Ovary (tissue), 10 donors: ENCODE measurements at regions of chr1 and their contacts with region 1.

Region 1: DNA sequence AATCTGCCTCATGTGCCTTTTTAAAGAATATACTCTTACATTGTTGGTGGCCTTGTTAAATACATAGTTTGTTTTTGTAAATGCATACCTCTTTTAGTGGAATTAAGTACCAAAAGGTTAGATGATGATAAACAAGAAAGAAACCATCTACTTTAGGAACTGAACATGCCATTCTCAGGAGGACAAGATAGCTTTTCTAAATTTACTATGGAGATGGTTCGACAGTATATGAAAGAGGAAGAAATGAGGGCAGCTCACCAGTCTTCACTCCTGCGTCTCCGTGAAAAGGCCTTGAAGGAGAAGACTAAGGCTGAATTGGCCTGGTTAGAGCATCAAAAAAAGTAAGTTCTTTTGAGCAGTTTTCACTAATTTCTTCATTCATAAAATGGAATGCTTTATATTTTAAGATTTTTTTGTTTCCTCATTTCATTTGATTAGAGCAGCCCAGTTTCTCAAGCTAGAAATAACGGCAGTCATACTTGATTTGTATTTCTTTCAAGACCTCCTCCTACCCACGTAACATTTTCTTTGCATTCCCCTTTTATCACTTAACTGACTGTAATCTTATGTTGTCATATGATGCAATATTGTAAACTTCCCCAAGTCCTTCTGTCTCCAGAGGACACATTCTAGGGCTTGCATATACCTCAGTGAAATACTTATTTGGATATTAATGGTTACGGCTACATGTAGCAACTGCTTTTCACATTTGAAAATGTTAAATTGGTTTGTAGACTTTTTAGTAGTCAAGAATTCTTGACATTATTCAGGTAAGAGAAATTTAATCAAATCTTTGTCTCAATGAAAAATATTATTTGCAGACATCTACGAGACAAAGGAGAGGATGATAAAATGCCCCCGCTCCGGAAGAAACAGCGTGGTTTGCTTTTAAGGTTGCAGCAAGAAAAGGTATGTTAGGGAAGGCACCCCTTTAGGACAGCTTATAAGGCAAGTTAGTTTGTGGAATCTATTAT is 99.3 kb downstream of the CEP350 start:
- DNase-seq: no peak
- H3K4me3 ChIP-seq: no peak overlapping the region
- H3K27ac ChIP-seq: no peak overlapping the region
- H3K4me1 ChIP-seq: no peaks in the 10 kb centered on the region
- H3K27me3 ChIP-seq: no peaks in the 10 kb centered on the region
- CTCF ChIP-seq: no peak
- EP300 ChIP-seq: no peak
- POLR2A ChIP-seq: no peak

Region 2: DNA sequence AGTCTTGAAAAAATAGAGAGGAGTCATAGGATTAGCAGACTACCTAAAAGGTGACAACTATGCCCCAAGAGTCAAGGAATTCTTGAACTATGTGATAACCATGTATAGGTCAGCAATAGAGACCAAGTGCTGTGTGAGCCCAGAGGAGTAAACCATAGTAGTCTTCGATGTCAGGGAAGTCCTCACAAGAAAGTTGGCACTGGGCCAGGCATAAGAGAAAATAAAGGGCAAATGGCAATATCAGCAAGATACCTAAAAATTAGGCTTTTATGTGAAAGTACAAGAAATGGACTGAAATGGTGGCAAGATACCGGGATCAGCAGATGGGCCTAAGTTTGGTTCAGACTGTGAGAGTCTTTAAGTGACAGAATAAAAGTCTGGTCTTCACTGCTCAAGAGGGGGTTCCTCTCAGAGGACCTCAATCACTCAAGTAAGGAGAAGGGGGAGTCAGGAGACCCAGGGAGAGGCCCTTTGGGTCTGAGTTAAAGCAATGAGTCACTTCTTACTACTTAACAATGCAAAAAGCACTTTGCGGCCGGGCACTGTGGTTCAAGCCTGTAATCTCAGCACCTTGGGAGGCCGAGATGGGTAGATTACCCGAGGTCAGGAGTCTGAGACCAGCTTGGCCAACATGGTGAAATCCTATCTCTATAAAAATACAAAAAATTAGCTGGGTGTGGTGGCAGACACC is 1446.0 kb before region 1 on chr1:
- intact Hi-C with region 1: no loop called
- DNase-seq: no peak
- H3K4me3 ChIP-seq: no peak overlapping the region
- H3K27ac ChIP-seq: no peak overlapping the region
- H3K4me1 ChIP-seq: no peaks in the 10 kb centered on the region
- H3K27me3 ChIP-seq: no peaks in the 10 kb centered on the region
- CTCF ChIP-seq: no peak
- EP300 ChIP-seq: no peak
- POLR2A ChIP-seq: no peak

Region 3: DNA sequence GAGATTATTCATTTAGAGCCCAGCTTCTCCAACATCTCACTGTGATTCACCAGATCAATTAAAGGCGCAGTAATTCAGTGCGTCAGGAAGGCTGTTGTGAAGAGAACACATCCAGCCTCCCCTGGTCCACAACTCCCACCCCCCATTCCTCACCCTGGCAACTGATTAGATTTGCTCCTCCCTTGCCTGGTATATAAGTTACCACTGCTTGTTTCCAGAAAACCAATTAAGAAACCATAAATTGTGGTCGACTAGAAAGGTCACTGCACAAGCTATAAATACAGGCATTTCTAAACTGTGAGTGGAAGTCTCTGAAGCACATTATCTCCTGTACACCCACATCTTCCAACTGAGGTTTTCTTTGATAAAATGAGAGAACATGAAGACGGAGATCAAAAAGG is 268.9 kb before region 1 on chr1:
- intact Hi-C with region 1: loop called in 1 of 4 experiments (anchors 5 kb)
- DNase-seq: no peak
- H3K4me3 ChIP-seq: no peak overlapping the region
- H3K27ac ChIP-seq: no peak overlapping the region
- H3K4me1 ChIP-seq: no peaks in the 10 kb centered on the region
- H3K27me3 ChIP-seq: no peaks in the 10 kb centered on the region
- CTCF ChIP-seq: no peak
- EP300 ChIP-seq: no peak
- POLR2A ChIP-seq: no peak